Activated T-helper 2 cell treated with anti-CD3 and anti-CD28 coated beads, Interferon-gamma antibody, Interleukin-2, Interleukin-4, amounts not matched to agents 10 μg/mL and 5 μg/mL and 100 μg/mL, durations not matched to agents 14 hours and 24 hours and 36 hours (primary cell): ENCODE measurements at regions of chr13 and their contacts with region 1.

Region 1: DNA sequence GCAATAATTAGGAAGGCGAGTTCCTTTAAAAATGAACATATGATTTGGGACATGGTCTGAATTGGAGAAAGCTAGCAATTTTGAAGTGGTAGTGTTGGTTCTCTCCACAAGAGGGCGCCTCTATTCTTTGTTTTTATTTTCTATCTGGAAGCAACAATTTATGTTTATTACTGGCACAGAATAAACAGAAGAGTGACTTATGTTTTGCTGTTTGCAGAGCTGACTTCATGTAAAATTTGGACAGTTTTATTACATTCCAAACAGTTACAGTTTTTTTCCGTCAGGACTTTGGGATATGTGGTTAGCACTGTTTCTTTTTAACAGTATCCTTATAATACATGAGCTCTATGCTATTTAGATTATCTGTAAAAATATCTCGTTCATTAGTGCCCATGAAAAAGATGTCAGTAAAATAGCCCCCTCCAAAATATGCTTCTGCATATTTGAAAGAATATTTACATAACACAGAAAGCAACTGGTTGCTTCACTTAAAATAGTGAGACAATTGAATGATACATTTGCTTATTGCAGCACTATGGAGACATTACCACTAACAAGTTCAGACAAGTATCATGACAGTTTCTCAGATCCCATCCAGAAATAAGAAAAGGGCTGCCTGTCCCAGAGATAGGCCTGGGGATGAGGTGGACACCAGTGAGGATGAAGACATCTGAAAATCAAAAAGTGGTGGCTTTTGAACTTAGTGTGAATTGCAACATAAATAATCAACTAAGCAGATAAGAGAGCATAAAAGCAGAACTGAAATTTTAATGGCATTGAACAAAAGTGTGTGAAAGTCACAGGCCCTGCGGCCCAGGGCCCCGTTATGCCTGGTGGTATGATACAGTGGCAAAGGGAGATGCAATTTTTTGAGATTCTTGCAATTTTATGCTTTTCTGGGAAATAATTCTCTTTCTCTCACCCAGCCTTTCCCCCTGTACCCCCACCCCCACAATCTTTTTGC is 32.3 kb upstream of the FGF9 start:
- DNase-seq: no peak
- H3K4me3 Mint-ChIP-seq: no peak overlapping the region
- H3K27ac Mint-ChIP-seq: no peak overlapping the region
- H3K4me1 Mint-ChIP-seq: no peaks in the 10 kb centered on the region
- H3K27me3 Mint-ChIP-seq: peaks cover 7% of the 10 kb centered on the region

Region 2: GRCh38 chr13:21717817-21718216 is 79.2 kb after region 1 on chr13:
- intact Hi-C with region 1: loop called (anchors 10 kb)
- DNase-seq: no peak
- H3K4me3 Mint-ChIP-seq: no peak overlapping the region
- H3K27ac Mint-ChIP-seq: no peak overlapping the region
- H3K4me1 Mint-ChIP-seq: no peaks in the 10 kb centered on the region
- H3K27me3 Mint-ChIP-seq: peaks cover 6% of the 10 kb centered on the region

Region 3: GRCh38 chr13:22278336-22278929 is 639.8 kb after region 1 on chr13:
- intact Hi-C with region 1: loop called (anchors 1 kb)
- DNase-seq: peak; percentile 16
- H3K4me3 Mint-ChIP-seq: no peak overlapping the region
- H3K27ac Mint-ChIP-seq: no peak overlapping the region
- H3K4me1 Mint-ChIP-seq: no peaks in the 10 kb centered on the region
- H3K27me3 Mint-ChIP-seq: no peaks in the 10 kb centered on the region

Region 4: DNA sequence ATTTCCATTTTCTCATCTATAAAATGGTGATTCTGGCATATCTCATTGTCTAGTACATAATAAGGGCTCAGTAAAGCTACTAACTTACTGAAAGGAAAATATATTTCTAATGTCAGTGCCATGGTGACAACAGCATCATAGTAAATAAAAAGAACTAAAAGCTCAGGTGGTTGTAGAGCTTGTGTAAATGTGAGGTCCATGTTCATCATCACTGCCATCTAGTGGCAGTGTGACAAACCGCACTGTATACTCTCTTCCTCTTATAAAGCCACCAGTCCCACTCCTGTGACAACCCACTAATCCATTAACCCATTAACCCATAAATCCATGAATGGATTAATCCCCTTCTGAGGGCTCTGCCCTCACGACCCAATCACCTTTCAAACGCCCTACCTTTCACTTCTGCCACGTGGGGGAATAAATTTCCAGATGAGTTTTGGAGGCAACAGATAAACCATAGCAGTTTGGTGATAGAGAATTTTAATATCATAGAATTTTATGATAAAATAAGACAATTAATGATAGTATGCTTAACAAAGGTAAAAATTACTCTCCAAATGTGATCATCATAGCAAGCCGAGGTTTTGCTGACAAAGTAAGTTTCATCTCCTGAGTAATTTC is 1381.7 kb after region 1 on chr13:
- intact Hi-C with region 1: loop called (anchors 10 kb)
- DNase-seq: no peak
- H3K4me3 Mint-ChIP-seq: no peak overlapping the region
- H3K27ac Mint-ChIP-seq: no peak overlapping the region
- H3K4me1 Mint-ChIP-seq: no peaks in the 10 kb centered on the region
- H3K27me3 Mint-ChIP-seq: no peaks in the 10 kb centered on the region